Activated CD4-positive, alpha-beta memory T cell treated with anti-CD3 and anti-CD28 coated beads, Interleukin-2, amount 10 ng/mL, durations not matched to agents 7 days and 5 days (primary cell): ENCODE measurements at regions of chr19 and their contacts with region 1.

Region 1: DNA sequence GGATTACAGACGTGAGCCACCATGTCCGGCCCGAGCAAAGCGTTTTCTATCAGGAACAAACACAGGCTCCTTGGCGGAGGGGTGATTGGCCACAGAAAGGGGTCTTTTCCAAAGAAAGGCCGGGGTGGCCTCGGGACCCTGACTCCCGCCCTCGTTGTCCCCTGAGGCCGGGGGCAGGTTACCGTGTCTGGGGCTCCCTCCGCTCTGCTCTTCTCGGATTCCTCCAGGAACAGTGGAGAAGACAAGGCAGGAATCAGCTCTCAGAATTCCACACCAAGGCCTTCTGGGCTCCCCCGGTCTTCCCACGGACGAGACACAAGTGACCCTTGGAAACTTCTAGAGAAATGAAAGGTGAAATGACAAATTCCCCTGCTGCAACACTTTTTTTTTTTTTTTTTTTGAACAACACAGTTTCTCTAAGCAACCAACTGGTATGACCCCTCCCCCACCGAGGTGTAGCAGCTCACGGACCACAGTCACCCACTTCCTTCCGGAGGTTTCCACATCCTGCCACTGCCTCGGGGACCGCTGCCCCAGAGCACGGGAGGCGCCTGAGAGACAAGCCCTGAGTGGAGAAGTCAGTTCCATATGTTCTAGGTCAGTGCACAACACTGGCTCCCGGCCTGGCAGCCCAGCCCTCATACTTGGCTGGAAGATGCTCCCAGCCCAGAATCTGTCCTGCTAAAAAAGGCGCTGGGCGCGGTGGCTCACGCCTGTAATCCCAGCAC is 11.0 kb downstream of the MOB3A start:
- DNase-seq: peak; percentile 97
- H3K4me3 Mint-ChIP-seq: peak overlapping the region; percentile 95
- H3K27ac Mint-ChIP-seq: peak overlapping the region; percentile 95
- H3K4me1 Mint-ChIP-seq: peaks cover 64% of the 10 kb centered on the region
- H3K27me3 Mint-ChIP-seq: no peaks in the 10 kb centered on the region

Region 2: DNA sequence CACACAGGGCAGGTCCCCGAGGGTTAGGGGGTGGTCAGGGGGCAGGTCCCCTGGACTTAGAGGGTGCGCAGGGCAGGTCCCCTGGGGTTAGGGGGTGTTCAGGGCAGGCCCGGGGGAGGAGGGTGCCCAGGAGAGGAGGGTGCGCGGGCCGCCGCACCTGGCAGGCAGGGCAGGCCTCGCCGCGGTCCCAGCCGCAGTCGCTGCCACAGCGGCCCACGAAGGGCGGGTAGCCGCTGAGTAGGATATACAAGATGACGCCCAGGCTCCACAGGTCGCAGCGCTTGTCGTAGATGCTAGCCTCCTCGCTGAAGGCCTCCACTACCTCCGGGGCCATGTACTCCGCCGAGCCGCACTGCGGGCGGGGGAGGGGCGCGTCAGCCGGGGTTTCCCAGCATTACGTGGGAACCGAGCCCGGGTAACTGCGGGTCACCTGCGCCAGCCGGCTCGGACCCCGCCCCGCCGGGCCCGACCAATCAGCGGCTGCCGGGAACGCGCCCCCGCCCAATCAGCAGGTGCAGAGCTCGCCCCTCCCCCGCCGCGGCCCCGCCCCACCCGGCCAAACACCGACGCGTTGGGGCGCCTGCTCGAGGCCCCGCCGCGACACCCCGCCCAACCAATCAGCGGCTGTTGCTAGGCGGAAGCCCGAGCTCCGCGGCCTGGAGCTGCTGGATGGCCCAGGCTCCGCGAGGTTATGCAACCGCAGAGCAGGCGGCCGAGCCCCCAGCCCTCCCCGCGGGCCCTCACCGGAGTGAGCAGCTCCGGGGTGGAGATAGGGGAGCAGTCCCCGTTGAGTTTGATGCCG is 43.3 kb before region 1 on chr19:
- CTCF ChIA-PET with region 1: no interaction called
- POLR2A ChIA-PET with region 1: interaction called, 11 read pairs
- DNase-seq: peak; percentile 99
- H3K4me3 Mint-ChIP-seq: peak overlapping the region; percentile 58
- H3K27ac Mint-ChIP-seq: peak overlapping the region; percentile 79
- H3K4me1 Mint-ChIP-seq: peaks cover 34% of the 10 kb centered on the region
- H3K27me3 Mint-ChIP-seq: no peaks in the 10 kb centered on the region

Region 3: GRCh38 chr19:2050991-2051772 is 34.0 kb before region 1 on chr19 and contains the start of gene MKNK2:
- CTCF ChIA-PET with region 1: interaction called, 3 read pairs
- POLR2A ChIA-PET with region 1: interaction called, 33 read pairs
- DNase-seq: peak; percentile 94
- H3K4me3 Mint-ChIP-seq: peak within 1 kb of the TSS; percentile 75
- H3K27ac Mint-ChIP-seq: peak within 1 kb of the TSS; percentile 90
- H3K4me1 Mint-ChIP-seq: peaks cover 58% of the 10 kb centered on the region
- H3K27me3 Mint-ChIP-seq: no peaks in the 10 kb centered on the region
- total RNA-seq, gene MKNK2: 239 to 253 TPM

Region 4: GRCh38 chr19:2070436-2070827 is 14.7 kb before region 1 on chr19:
- CTCF ChIA-PET with region 1: interaction called, 3 read pairs
- POLR2A ChIA-PET with region 1: interaction called, 13 read pairs
- DNase-seq: no peak
- H3K4me3 Mint-ChIP-seq: no peak overlapping the region
- H3K27ac Mint-ChIP-seq: no peak overlapping the region
- H3K4me1 Mint-ChIP-seq: peaks cover 25% of the 10 kb centered on the region
- H3K27me3 Mint-ChIP-seq: no peaks in the 10 kb centered on the region

Region 5: DNA sequence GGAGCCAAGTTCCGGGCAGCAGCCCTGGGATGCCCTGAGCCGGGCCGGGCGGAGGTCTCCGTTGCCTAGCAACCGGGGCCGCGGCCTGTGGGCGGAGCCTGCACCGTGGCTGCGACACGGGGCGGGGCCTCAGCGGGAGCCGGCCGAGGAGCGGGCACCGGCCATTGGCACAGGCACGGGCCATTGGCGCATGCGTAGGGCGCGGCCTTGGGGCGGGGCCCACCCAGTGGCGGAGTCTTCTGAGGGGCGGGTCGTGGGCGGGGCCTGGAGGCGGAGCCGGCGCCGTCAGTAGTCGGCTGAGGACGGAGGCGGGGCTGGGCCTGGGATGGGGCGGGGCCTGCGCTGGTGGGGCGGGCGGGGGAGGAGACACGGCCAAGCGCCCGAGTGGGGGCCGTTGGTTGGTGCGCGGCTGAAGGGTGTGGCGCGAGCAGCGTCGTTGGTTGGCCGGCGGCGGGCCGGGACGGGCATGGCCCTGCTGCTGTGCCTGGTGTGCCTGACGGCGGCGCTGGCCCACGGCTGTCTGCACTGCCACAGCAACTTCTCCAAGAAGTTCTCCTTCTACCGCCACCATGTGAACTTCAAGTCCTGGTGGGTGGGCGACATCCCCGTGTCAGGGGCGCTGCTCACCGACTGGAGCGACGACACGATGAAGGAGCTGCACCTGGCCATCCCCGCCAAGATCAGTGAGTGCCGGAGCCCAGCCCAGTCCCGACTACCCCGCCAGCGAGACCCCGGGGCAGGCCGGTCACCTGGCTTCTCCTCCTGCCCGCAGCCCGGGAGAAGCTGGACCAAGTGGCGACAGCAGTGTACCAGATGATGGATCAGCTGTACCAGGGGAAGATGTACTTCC is 11.5 kb after region 1 on chr19 and contains the start of gene IZUMO4:
- CTCF ChIA-PET with region 1: interaction called, 54 read pairs
- POLR2A ChIA-PET with region 1: interaction called, 118 read pairs
- DNase-seq: peak; percentile 100
- H3K4me3 Mint-ChIP-seq: peak within 1 kb of the TSS; percentile 99
- H3K27ac Mint-ChIP-seq: peak within 1 kb of the TSS; percentile 88
- H3K4me1 Mint-ChIP-seq: peaks cover 29% of the 10 kb centered on the region
- H3K27me3 Mint-ChIP-seq: no peaks in the 10 kb centered on the region
- total RNA-seq, gene IZUMO4: 10.3 to 10.5 TPM